Posterior cingulate gyrus (tissue), 11 donors: ENCODE measurements at regions of chr11 and their contacts with region 1.

Region 1: GRCh38 chr11:108654994-108655631 is 9.8 kb upstream of the DDX10 start:
- DNase-seq: peak in 4 of 10 donors; percentile 15 to 45 (median 24)

Region 2: DNA sequence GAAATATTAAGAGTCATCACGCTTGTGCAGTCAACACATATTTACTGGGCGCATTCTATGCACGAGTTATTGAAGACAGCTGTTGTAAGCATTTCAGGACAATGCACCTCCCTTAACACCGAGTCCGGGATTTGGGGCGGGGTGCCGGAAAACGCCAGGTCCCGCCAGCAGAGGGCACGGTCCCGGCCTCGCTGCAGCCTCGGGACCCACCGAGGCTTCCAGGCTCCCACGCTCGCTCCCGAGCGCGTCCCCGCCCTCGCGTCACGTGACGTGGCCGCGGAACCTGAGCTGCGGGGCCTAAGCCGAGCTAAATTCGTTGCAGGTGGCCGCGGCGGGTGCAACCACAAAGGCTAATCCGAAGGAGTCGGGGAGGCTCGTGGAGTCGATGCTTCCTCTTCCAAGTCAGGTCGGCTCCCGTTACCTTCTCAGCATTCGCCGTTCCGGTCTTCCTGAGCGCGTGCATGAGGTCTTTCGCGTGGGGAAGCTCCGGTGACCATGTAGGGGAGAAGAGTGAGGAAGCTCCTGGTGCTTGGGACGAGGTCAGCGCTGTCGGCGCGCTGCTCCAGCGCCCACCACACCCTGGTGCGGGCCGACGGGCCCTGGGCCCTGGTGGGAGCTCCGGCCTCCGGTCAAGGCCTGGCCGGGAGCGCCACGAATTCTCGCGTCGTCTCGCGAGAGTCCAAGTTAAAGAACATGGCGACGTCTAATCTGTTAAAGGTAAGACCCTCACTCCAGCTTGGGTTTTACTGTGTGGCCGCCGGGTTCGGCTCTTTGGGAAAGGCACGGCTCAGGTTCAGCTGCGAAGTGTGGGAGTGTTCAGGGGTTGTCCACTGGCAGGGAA is 646.2 kb before region 1 on chr11 and contains the start of gene CUL5:
- intact Hi-C with region 1: loop called (anchors 10 kb)
- DNase-seq: peak; percentile 85 to 98 (median 90)

Region 3: DNA sequence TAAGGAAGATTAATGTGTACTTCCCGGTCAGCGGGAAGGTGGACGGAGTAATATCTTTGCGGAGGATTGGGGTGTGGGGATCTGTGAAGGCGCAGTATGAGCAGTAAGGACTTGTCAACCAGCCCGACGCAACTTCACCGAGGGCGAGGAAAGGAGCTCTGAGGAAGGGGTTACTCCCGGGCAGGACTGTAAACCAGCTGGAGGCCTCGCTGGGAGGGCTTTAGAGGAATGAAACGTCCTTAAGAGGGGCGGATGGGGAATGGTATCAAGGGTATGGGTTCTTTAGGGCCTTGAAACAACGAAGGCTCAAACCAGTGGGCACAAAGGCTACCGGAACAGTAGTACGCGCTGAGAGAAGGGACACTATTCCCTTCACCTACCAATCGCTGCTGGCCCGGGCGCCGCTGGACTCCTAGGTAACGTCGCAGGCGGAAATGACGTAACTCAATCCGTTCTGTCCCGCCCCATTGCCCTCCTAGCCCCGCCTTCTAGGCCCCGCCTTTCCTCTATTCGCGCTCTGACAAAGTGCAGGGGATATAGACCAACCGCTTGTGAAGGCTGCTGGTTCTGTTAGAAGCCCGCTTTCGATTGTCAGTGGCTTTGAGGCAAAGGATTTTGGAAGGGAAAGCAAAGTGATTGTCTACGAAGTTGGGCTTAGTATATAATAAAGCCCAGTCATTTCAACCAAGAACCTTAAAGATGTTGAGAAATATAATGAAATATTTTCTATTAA is 187.9 kb before region 1 on chr11 and contains the start of gene C11orf65:
- intact Hi-C with region 1: loop called (anchors 10 kb)
- DNase-seq: peak; percentile 93 to 99 (median 97)

Region 4: DNA sequence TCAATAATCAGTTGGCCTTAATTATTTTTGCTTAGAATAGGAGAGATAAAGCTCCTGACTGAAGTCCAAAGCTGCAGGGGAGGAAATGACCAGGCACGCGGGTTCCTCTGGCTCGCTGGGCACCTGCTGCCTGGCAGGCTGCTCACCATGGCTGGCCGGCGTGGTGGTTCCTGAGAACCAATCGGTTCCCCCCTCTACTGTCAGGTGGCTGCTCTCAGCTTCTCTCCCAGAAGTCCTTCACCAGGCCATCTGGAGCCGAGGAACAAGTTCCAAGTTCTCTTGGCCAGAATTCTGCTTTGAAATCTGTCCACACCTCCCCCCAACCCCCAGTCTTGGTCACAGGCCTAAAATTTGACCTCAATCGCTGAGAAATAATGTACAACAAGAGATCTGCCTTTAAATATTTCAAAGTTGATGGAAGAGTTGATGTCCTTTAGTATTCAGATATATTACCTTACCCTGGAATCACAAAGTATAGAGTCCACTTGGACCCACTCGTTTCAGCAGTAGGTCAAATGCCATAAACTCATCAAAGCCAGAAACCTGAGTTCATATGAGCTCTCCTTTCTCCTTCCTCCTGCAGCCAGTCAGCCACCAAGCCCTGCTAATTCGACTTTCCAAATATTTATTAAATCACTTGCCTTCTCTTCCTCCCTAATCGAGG is 86.8 kb before region 1 on chr11:
- intact Hi-C with region 1: no loop called
- DNase-seq: peak in 7 of 10 donors; percentile 8 to 81 (median 17)